Common myeloid progenitor, CD34-positive (primary cell): ENCODE measurements at regions of chr6 and their contacts with region 1.

Region 1: DNA sequence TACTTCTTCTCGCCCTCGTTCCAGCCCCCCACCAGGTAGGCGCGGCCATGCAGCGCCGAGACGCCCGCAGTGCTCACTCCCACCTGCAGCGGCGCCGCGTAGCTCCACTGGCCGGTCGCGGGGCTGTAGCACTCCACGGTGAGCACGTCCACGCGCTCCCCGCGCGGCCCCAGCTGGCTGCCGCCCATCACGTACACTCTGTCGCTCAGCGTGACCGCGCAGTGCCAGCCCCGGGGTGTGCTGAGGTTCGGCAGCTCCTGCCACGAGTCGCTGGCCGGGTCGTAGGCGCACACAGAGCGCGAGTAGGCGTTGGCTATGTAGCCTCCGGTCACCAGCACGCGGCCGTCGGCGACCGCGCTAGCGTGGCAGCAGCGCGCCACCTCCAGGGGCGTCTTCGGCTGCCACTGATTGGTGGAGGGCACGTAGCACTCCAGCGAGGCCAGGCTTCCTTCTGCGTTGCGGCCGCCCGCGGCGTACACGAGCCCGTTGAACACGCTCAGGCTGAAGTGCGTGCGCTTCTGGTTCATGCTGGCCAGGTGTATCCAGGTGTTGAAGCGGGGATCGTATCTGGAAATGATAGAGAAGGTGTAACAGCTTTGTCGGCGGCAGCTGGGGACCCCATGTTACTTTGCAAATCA is 13.7 kb downstream of the KLHL31 start:
- DNase-seq: peak; percentile 83 to 93 (median 91)
- H3K4me3 ChIP-seq: peak overlapping the region; percentile 60 to 83 (median 70)
- H3K27ac ChIP-seq: no peak overlapping the region
- H3K4me1 ChIP-seq: peaks cover under 1 to 37% (median 21%) of the 10 kb centered on the region in 4 experiments
- H3K27me3 ChIP-seq: no peaks in the 10 kb centered on the region

Region 2: DNA sequence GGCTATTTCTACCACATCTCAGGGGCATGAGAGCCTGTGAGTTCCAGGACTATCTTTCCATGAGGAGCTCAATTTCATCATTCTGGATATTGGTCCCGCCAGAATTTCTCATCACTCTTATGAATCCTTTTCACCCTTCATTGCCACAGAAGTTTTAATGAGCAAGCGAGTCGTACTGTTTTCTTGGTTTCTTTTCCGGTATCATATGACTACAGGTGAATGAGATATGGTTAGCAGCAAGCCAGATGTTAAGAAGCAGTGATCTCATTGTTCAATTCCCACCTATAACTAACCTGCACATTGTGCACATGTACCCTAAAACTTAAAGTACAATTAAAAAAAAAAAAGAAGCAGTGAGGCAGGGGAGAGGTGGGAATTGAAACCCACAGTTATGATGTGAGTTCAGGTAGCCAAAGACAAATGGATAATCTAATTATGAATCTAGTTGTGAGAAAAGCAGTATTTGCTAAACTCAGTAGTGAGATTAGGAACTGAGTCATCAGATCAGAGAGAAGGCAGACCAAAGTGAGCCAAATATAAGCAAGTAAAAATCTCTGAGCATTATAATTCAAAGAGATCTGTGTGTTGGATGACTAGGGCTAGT is 225.1 kb before region 1 on chr6:
- CTCF ChIA-PET with region 1: no interaction called
- POLR2A ChIA-PET with region 1: no interaction called
- DNase-seq: no peak
- H3K4me3 ChIP-seq: no peak overlapping the region
- H3K27ac ChIP-seq: no peak overlapping the region
- H3K4me1 ChIP-seq: peaks cover 0 to 8% (median 0%) of the 10 kb centered on the region in 4 experiments
- H3K27me3 ChIP-seq: no peaks in the 10 kb centered on the region

Region 3: GRCh38 chr6:53544470-53545308 is 107.2 kb before region 1 on chr6 and contains the start of gene GCLC:
- CTCF ChIA-PET with region 1: interaction called, 13 read pairs
- POLR2A ChIA-PET with region 1: interaction called, 4 read pairs
- DNase-seq: peak; percentile 97 to 99 (median 98)
- H3K4me3 ChIP-seq: peak within 1 kb of the TSS; percentile 74 to 91 (median 84)
- H3K27ac ChIP-seq: peak within 1 kb of the TSS; percentile 73 to 86
- H3K4me1 ChIP-seq: peaks cover 3 to 47% (median 27%) of the 10 kb centered on the region in 4 experiments
- H3K27me3 ChIP-seq: no peaks in the 10 kb centered on the region

Region 4: DNA sequence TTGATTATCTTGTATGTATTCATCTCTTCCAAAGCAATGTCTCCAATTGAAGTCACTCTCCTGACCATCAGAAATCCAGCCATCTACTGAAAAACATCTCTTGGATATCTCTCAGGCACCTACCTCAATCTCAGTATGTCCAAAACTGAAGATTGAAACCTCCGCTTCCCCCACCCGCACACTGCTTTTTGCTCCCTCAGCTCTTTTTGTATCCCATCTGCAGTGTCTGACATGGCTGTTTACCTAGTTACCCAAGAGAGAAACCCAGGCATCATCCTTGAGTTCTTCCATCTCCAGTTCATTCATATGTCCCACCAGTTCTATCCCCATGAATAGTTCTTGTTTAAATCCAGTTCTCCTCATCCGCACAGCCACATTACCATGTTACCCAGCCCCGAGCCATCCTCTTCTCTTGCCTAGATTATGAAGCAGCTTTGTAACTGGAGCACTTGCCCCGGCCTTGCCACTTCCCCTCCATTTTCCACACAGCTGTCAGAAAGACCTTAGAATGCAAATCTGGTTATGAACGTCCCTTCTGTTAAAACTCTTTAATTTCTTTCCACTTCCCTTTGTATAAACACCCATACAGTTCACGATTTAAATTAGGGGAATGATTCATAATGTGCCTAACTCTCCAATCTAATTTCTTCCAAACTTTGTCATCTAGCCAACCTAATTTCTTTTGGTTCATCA is 66.5 kb before region 1 on chr6:
- CTCF ChIA-PET with region 1: no interaction called
- POLR2A ChIA-PET with region 1: no interaction called
- DNase-seq: peak in 1 of 3 donors; percentile 10
- H3K4me3 ChIP-seq: no peak overlapping the region
- H3K27ac ChIP-seq: no peak overlapping the region
- H3K4me1 ChIP-seq: peaks cover 0 to 28% (median 6%) of the 10 kb centered on the region in 4 experiments
- H3K27me3 ChIP-seq: no peaks in the 10 kb centered on the region

Region 5: GRCh38 chr6:53662457-53662856 is 10.6 kb after region 1 on chr6:
- CTCF ChIA-PET with region 1: interaction called, 10 read pairs
- POLR2A ChIA-PET with region 1: no interaction called
- DNase-seq: no peak
- H3K4me3 ChIP-seq: no peak overlapping the region
- H3K27ac ChIP-seq: no peak overlapping the region
- H3K4me1 ChIP-seq: no peaks in the 10 kb centered on the region
- H3K27me3 ChIP-seq: peaks cover 0 to 4% (median 0%) of the 10 kb centered on the region in 5 experiments

Region 6: GRCh38 chr6:53741034-53741823 is 89.3 kb after region 1 on chr6:
- CTCF ChIA-PET with region 1: no interaction called
- POLR2A ChIA-PET with region 1: no interaction called
- DNase-seq: no peak
- H3K4me3 ChIP-seq: no peak overlapping the region
- H3K27ac ChIP-seq: no peak overlapping the region
- H3K4me1 ChIP-seq: peaks cover 0 to 8% (median 4%) of the 10 kb centered on the region in 4 experiments
- H3K27me3 ChIP-seq: no peaks in the 10 kb centered on the region